PC-9 (cell line): ENCODE measurements at regions of chr5 and their contacts with region 1.

Region 1: GRCh38 chr5:74394916-74395781 is 245.4 kb downstream of the ENC1 start:
- DNase-seq: peak; percentile 91 to 99
- H3K4me3 ChIP-seq: no peak overlapping the region; the same call in 1 of the 2 replicates
- H3K27ac ChIP-seq: peak overlapping the region; percentile 82
- H3K4me1 ChIP-seq: peaks cover 42% of the 10 kb centered on the region
- H3K27me3 ChIP-seq: no peaks in the 10 kb centered on the region
- CTCF ChIP-seq: peak; percentile 61

Region 2: GRCh38 chr5:73985145-73985544 is 410.0 kb before region 1 on chr5:
- CTCF ChIA-PET with region 1: no interaction called
- POLR2A ChIA-PET with region 1: no interaction called
- intact Hi-C with region 1: loop called (anchors 10 kb)
- DNase-seq: peak; percentile 25 to 46
- H3K4me3 ChIP-seq: no peak overlapping the region
- H3K27ac ChIP-seq: no peak overlapping the region; the same call in 1 of the 2 replicates
- H3K4me1 ChIP-seq: no peaks in the 10 kb centered on the region; the same call in 1 of the 2 replicates
- H3K27me3 ChIP-seq: no peaks in the 10 kb centered on the region
- CTCF ChIP-seq: peak; percentile 73

Region 3: DNA sequence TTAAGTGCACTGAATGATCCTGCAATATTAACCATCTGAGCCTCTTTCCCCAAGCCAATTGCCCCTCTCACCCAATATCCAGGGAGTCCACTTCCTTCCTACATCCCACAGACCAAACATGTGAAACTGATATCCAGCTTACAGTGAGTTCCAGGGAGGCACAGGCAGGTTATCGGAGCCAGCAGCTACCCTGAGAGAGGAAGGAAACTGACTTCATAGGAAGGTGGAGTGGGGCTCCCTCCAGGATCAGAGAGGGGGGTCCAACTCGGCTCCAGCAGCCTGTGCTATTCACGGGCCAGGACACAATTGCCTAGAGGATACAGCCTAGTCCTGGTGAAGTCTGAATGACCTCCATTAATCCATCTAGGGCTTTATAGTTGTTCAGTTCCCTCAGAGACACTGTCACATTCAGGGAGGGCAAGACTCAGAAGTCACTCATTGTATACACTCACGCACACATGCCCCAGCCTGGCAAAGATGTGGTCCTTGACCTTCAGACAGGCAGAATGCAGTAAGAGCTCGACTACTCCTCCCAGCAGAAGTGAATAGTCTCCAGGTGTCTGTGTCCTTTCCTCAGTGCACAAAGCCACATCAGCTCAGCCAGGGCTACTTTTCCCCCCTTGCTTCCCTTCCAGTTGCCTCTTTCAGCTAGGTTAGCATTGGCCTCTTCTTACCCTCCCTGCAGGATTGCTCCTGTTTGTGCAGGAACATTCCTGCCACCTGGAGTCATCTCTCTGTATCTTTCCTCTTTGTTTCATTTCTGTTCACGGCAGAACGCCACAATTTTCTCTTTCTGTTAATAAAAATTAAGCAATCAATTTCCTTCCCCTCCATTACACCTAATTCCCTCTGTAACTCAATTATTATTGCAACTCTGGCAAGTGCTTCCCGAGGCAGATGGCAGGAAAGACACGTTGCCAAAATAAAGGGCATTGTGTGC is 267.5 kb before region 1 on chr5:
- CTCF ChIA-PET with region 1: no interaction called
- POLR2A ChIA-PET with region 1: no interaction called
- intact Hi-C with region 1: loop called (anchors 5 kb)
- DNase-seq: peak in 1 of 2 experiments; percentile 25
- H3K4me3 ChIP-seq: no peak overlapping the region
- H3K27ac ChIP-seq: no peak overlapping the region
- H3K4me1 ChIP-seq: 0 out of 2 replicates have a peak, but pooled peaks cover 13% of the 10 kb centered on the region
- H3K27me3 ChIP-seq: no peaks in the 10 kb centered on the region
- CTCF ChIP-seq: peak; percentile 32; the same call in 1 of the 2 replicates

Region 4: GRCh38 chr5:74272024-74272775 is 122.9 kb before region 1 on chr5:
- CTCF ChIA-PET with region 1: no interaction called
- POLR2A ChIA-PET with region 1: no interaction called
- intact Hi-C with region 1: loop called (anchors 1 kb)
- DNase-seq: peak; percentile 59 to 80
- H3K4me3 ChIP-seq: no peak overlapping the region
- H3K27ac ChIP-seq: peak overlapping the region; percentile 71
- H3K4me1 ChIP-seq: peaks cover 22% of the 10 kb centered on the region
- H3K27me3 ChIP-seq: no peaks in the 10 kb centered on the region
- CTCF ChIP-seq: no peak

Region 5: GRCh38 chr5:74378464-74378863 is 16.7 kb before region 1 on chr5:
- CTCF ChIA-PET with region 1: no interaction called
- POLR2A ChIA-PET with region 1: interaction called, 8 read pairs
- intact Hi-C with region 1: loop called (anchors 2 kb)
- DNase-seq: no peak
- H3K4me3 ChIP-seq: no peak overlapping the region
- H3K27ac ChIP-seq: no peak overlapping the region
- H3K4me1 ChIP-seq: peaks cover 34% of the 10 kb centered on the region
- H3K27me3 ChIP-seq: no peaks in the 10 kb centered on the region
- CTCF ChIP-seq: no peak

Region 6: DNA sequence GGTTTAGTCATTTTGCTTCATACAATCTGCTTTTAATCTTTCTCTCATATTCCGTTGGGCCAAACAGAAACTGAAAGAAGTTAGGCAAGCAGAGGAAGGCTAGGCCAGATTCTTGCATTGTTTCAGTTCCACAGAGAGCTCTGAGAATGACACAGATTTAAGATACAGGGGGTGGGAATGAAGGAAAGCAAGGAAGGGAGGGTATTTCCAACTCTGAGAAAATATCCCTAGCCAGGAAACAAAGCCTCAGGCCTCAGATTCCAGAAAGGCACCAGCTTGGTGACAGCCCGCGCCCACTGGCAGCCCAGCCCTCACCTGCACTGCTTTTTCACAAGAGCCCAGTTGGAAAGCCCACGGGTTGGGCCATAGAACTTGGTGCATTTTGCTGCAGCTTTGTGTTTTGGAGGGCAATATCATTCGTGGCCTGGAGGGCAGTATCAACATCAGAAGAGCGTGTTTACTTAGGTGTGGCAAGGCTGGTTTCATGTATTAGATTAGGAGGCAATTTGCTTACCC is 181.8 kb after region 1 on chr5:
- CTCF ChIA-PET with region 1: interaction called, 4 read pairs
- POLR2A ChIA-PET with region 1: interaction called, 5 read pairs
- intact Hi-C with region 1: loop called (anchors 1 kb)
- DNase-seq: peak; percentile 53 to 68
- H3K4me3 ChIP-seq: no peak overlapping the region
- H3K27ac ChIP-seq: peak overlapping the region; percentile 82
- H3K4me1 ChIP-seq: peaks cover 31% of the 10 kb centered on the region
- H3K27me3 ChIP-seq: no peaks in the 10 kb centered on the region
- CTCF ChIP-seq: no peak